Activated T-helper 1 cell treated with anti-CD3 and anti-CD28 coated beads, Interleukin-12 subunit alpha, Interleukin-12 subunit beta, Interleukin-2, Interleukin-4 antibody, amounts not matched to agents 30 ng/mL and 10 ng/mL and 1 ng/mL, durations not matched to agents 14 hours and 24 hours and 36 hours (primary cell): ENCODE measurements at regions of chr10 and their contacts with region 1.

Region 1: DNA sequence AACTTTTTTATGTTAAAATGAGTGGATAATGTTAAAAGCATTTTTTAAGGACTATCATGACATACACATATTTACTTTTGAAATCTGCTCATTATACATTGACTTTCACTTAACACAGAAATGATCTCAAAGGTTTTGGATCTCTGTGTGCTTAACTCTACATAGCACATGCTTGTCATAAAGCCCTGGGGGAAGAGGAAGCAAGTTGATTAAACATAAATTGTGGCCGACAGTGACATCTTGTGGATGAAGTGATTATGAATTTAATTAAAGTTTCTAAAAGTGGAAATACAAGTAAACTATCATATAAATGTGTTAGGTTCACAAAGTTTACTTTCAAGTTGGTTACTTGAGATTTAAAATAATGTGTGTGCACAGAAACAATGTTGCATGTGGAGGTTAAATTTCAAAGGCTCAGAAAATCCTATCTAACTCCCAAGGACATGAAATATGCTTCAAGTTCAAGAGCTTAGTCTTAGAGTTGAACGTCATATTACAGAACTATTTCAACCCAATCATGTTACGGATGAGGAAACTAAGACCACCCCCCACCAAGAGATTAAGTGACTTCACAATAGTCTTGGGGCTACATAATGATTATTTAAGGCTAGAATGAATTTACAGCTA is 1247.7 kb downstream of the GATA3 start:
- DNase-seq: no peak
- H3K4me3 Mint-ChIP-seq: no peak overlapping the region
- H3K27ac Mint-ChIP-seq: no peak overlapping the region
- H3K4me1 Mint-ChIP-seq: no peaks in the 10 kb centered on the region
- H3K27me3 Mint-ChIP-seq: peaks cover 6% of the 10 kb centered on the region

Region 2: DNA sequence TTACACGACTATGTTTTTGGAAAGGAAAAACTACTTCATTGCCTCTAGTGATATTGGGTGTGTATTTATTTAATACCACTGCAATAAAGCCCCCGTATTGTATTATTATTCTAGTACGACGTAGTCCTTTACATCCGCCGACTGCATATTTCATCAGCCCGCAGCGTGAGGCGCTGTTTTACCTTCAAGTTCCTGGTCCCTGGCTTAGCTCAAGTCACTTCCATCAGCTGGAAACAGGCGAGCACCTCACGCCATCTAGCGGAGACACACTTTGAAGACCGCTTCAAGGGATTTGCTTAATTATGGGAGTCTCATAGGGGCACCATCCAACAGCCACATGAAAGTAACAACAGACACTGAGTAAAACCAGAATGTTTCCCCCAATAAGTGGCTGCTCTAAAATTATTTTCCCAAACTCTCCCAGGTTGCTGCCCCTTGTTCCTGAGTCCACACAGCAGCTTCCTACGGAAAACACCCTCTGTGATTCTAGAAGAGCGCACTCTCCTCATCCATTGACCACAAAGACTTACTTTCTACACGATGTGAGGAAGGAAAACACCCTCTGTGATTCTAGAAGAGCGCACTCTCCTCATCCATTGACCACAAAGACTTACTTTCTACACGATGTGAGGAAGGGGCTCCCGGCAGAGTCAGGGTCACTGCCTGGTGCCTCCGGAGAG is 1614.9 kb before region 1 on chr10:
- intact Hi-C with region 1: loop called (anchors 2 kb)
- DNase-seq: peak; percentile 66
- H3K4me3 Mint-ChIP-seq: no peak overlapping the region
- H3K27ac Mint-ChIP-seq: no peak overlapping the region
- H3K4me1 Mint-ChIP-seq: peaks cover 19% of the 10 kb centered on the region
- H3K27me3 Mint-ChIP-seq: peaks cover 28% of the 10 kb centered on the region

Region 3: GRCh38 chr10:7818295-7819122 is 1483.7 kb before region 1 on chr10 and contains the start of gene TAF3:
- intact Hi-C with region 1: loop called (anchors 1 kb)
- DNase-seq: peak; percentile 92
- H3K4me3 Mint-ChIP-seq: peak within 1 kb of the TSS; percentile 97
- H3K27ac Mint-ChIP-seq: peak within 1 kb of the TSS; percentile 91
- H3K4me1 Mint-ChIP-seq: peaks cover 21% of the 10 kb centered on the region
- H3K27me3 Mint-ChIP-seq: peaks cover 20% of the 10 kb centered on the region
- total RNA-seq, gene TAF3: 15.1 and 16.3 TPM in 2 replicates

Region 4: DNA sequence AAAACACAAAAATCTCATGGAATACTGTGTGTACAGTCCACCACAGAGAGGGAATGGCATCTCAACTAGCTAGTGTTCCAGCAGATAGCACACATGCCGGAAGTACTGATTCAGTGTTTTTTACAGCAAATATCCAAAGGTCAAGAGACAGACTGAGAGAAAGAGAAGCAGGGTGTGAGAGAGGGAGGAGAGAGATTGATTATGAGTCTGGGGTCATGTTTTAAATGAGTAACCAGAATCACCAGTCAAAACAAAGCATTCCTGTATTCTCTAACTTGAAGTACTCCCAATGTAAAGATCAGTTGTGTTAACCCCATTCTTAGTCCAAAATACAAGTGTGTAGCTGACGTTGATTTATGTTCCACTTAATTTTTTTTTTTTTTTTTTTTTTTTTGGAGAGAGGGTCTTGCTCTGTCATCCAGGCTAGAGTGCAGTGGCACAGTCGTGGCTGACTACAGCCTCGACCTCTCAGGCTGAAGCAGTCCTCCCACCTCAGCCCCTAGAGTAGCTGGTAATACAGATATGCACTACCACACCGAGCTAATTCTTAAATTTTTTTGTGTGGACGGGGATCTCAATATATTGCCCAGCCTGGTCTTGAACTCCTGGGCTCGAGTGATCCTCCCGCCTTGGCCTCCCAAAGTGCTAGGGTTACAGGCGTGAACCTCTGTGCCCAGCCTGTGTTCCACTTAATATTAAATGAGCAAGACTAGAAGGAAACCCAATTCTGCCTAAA is 1369.8 kb before region 1 on chr10:
- intact Hi-C with region 1: no loop called
- DNase-seq: no peak
- H3K4me3 Mint-ChIP-seq: no peak overlapping the region
- H3K27ac Mint-ChIP-seq: no peak overlapping the region
- H3K4me1 Mint-ChIP-seq: peaks cover 10% of the 10 kb centered on the region
- H3K27me3 Mint-ChIP-seq: no peaks in the 10 kb centered on the region

Region 5: GRCh38 chr10:8985651-8986050 is 316.6 kb before region 1 on chr10:
- intact Hi-C with region 1: no loop called
- DNase-seq: no peak
- H3K4me3 Mint-ChIP-seq: no peak overlapping the region
- H3K27ac Mint-ChIP-seq: no peak overlapping the region
- H3K4me1 Mint-ChIP-seq: peaks cover 4% of the 10 kb centered on the region
- H3K27me3 Mint-ChIP-seq: peaks cover 3% of the 10 kb centered on the region

Region 6: DNA sequence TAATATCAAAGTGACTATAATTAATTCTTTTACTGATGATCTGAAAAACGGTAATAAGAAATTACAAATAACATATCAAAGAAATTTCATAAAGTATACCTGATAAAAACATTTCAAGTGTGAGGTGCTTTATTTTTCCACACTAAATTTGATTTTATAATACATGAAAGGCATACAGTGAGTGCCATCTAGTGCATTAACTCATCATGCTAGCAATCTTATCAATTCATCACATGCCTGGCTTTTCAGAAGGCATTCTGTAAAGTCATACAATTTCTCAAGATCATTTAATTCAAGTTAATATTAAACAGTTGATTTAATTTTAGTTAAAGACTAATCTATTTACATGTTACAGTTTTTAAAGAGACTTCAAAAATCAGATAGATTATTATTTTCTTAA is 226.8 kb before region 1 on chr10:
- intact Hi-C with region 1: loop called (anchors 10 kb)
- DNase-seq: no peak
- H3K4me3 Mint-ChIP-seq: no peak overlapping the region
- H3K27ac Mint-ChIP-seq: no peak overlapping the region
- H3K4me1 Mint-ChIP-seq: no peaks in the 10 kb centered on the region
- H3K27me3 Mint-ChIP-seq: no peaks in the 10 kb centered on the region

Region 7: GRCh38 chr10:9274206-9274755 is 28.0 kb before region 1 on chr10:
- intact Hi-C with region 1: no loop called
- DNase-seq: no peak
- H3K4me3 Mint-ChIP-seq: no peak overlapping the region
- H3K27ac Mint-ChIP-seq: no peak overlapping the region
- H3K4me1 Mint-ChIP-seq: no peaks in the 10 kb centered on the region
- H3K27me3 Mint-ChIP-seq: no peaks in the 10 kb centered on the region